Right ventricle myocardium inferior (tissue), 1 donor: ENCODE measurements at regions of chr5 and their contacts with region 1.

Region 1: DNA sequence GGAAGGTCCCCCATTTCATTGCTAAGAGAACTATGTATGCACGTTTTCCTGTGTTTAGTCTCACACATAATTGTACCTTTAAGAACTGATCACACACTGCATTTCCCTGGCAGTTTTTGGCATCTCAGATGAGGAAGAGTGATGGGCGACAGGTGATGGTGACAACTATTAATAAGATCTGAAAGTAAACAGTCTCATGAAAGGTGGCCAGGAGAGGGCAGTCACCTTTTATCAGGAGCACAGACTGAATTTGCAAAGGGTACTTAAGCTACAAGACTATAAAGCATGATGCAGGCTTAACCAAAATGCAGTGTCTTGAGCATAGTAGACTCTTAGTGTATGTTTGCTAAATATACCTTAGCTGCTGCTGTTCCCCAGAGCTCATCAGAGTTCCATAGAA is 91.5 kb downstream of the GHR start:
- DNase-seq: no peak
- ATAC-seq: no peak

Region 2: DNA sequence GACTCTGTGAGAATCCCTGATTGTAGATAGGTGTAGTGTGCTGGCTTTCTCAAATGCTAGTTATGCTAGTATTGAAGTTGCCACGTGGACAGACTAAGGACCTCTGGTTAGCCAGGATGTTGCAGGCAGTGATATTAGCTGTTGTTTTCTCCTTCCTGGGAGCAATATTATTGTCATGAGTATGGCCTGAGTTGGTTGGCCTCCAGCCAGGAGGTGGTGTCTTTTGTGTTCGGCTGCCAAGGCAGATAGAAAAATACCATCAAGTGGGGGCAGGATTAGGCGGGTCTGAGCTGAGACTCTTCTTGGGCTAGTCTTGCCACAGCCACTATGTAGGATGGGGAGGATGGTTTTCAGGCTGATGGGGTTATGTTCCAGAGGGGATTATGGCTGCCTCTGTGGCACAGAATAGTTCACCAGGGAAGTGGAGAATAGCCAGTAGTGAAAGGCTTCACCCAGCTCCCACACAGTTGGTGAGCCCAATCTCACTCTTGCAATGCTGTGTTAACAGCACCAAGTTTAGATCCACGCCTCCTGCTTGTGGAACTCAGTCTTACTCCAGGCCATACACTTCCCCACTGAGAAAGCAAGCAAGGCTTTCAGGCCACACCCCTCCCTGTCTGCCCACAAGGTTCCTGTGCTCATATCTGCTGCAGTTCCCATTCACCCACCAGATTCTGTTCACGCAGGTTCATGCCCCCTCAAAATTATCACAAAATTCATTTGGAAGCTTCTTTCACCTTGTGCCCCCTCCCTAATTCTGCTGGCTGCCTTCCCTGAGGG is 60.3 kb before region 1 on chr5:
- intact Hi-C with region 1: no loop called
- DNase-seq: no peak
- ATAC-seq: peak; percentile 23

Region 3: DNA sequence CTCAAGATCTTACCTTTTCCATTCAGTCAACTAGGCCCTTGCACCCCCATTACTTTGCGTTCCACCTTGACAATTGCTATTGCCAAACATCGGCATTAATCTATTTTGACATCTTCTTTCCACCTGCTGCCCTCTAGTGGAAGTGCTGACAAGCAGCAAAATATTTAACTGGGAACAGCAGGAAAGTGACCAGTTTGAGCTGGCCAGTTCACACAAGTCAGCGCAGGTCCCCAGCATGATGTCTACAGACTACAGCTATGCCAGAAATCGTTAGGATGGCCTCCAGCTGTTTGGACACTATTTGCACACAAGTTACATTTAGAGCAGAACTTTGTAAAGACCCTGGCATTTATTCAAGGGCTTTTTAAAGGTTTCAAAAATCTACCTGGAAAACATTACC is 68.6 kb after region 1 on chr5:
- intact Hi-C with region 1: loop called (anchors 5 kb)
- DNase-seq: peak; percentile 65
- ATAC-seq: peak; percentile 70